ENCODE measurements at regions of chr6 and their contacts with region 1.

Region 1: GRCh38 chr6:84774157-84774984 is 10.0 kb upstream of the TBX18 start:
- DNase-seq: peak; percentile 75

Region 2: GRCh38 chr6:84428300-84428907 is 346.0 kb before region 1 on chr6:
- intact Hi-C with region 1: loop called (anchors 10 kb)
- DNase-seq: no peak

Region 3: DNA sequence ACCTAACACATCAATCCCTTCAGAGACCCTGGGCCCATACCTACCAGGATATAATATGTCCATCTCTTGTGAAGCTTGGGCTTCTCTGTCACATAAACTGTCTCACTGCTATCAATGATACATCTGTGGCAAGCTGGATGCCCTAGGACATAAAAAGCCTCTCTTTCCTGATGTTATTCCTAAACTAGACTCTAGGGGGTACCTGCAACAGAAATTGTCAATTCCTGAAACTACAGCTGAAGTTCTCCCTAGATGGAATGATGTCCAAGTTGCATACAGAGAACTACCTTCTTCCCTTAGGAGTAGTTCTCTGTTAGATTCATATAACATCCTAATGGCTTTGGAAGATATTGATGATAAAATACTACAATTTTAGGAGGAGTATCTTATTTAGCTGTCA is 45.8 kb before region 1 on chr6:
- intact Hi-C with region 1: no loop called
- DNase-seq: no peak

Measured in cardiac septum (tissue), 1 donor.